Heart right ventricle (tissue), 16 donors: ENCODE measurements at regions of chr3 and their contacts with region 1.

Region 1: DNA sequence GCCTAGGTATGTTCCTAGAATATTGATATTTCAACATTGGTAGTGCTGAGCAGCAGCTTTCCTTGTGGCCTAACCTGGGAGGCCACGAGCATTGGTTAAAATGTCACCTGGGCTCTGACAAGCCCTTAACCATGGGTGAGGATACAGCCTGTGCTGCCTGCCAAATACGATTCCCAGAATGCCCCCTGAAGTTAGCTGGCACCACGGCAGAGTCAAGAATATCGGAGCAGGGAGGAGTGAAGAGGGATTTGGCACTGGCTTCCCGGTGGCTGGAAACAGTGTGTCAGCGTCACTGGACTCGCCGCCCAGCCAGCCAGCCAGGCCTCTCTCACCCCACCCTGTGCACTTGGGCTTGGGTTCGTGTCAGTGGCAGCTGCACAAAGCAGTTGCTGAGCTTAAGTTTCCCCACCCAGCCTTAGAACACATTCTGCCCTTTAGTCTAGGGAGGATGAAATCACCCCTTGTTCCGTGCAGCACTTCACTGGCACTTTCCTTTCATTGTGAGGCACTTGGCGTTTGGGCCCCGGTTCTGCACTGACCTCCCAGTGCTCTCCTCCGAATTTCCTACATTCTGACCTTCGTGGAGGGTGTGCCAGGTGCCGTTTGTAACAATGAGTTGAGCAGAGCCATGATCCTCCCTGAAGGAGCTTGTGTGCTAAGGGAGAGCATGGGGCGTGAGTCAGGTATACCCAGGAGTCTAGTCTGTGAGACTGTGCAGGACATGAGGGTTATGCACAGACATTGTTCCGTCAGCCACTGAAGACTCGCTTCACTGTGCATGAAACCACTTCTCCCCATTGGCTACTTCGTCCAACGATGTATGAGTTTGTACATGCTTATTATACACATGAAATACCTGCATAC is 152.8 kb upstream of the BHLHE40 start:
- DNase-seq: peak; percentile 85 to 87
- ATAC-seq: peak; percentile 85 to 96 (median 90)
- H3K4me3 ChIP-seq: peak overlapping the region in 4 of 10 donors; percentile 5 to 16 (median 10)
- H3K27ac ChIP-seq: peak overlapping the region; percentile 21 to 92 (median 85)
- H3K4me1 ChIP-seq: peaks cover 16 to 84% (median 44%) of the 10 kb centered on the region in 9 donors
- H3K27me3 ChIP-seq: no peaks in the 10 kb centered on the region
- CTCF ChIP-seq: no peak

Region 2: GRCh38 chr3:4741404-4742307 is 84.8 kb before region 1 on chr3:
- intact Hi-C with region 1: loop called in 1 of 10 experiments (anchors 5 kb)
- DNase-seq: peak; percentile 41 to 87
- ATAC-seq: peak; percentile 80 to 92 (median 86)
- H3K4me3 ChIP-seq: no peak overlapping the region
- H3K27ac ChIP-seq: peak overlapping the region; percentile 61 to 97 (median 87)
- H3K4me1 ChIP-seq: peaks cover 10 to 93% (median 47%) of the 10 kb centered on the region in 9 donors
- H3K27me3 ChIP-seq: no peaks in the 10 kb centered on the region
- CTCF ChIP-seq: no peak

Region 3: DNA sequence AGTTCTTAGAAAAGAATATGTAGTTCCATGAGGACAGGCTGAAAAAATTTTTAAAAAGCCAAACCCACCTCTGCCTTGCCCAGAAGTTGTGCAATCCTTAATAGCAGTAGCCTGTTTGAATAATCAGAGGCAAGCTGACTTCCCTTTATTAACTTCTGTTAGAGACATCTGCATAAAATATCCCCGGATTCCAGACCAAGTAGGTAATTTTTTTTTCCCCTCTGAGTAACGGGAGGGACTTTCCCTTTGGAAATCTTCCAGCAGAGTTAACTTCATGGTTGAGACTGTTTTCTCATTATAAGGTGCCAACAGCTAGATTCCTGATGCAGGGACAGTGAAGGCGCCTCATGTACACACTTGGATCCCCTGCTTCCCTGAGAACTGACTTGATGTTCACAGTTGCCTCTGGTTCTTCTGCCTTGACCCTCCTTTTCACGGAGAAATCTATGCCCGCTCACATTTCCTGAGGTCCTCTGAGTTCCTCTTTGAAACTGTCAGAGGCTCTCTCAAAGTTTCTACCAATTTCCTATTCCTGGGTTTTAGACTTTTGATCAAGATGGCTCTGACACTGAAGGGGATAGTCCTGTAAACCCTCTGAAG is 74.9 kb before region 1 on chr3:
- intact Hi-C with region 1: loop called in 1 of 10 experiments (anchors 5 kb)
- DNase-seq: peak in 1 of 2 donors; percentile 31
- ATAC-seq: peak; percentile 40 to 83 (median 74)
- H3K4me3 ChIP-seq: peak overlapping the region in 5 of 10 donors; percentile 10 to 28 (median 27)
- H3K27ac ChIP-seq: peak overlapping the region; percentile 7 to 94 (median 81)
- H3K4me1 ChIP-seq: peaks cover 8 to 74% (median 40%) of the 10 kb centered on the region in 9 donors
- H3K27me3 ChIP-seq: no peaks in the 10 kb centered on the region
- CTCF ChIP-seq: no peak

Region 4: GRCh38 chr3:4772171-4772804 is 54.2 kb before region 1 on chr3:
- intact Hi-C with region 1: loop called in 2 of 10 experiments (anchors 5 kb)
- DNase-seq: peak; percentile 84 to 86
- ATAC-seq: peak; percentile 85 to 92 (median 91)
- H3K4me3 ChIP-seq: peak overlapping the region in 1 of 10 donors; percentile 5
- H3K27ac ChIP-seq: peak overlapping the region; percentile 71 to 89 (median 84)
- H3K4me1 ChIP-seq: peaks cover 17 to 46% (median 31%) of the 10 kb centered on the region in 9 donors
- H3K27me3 ChIP-seq: no peaks in the 10 kb centered on the region
- CTCF ChIP-seq: no peak

Region 5: DNA sequence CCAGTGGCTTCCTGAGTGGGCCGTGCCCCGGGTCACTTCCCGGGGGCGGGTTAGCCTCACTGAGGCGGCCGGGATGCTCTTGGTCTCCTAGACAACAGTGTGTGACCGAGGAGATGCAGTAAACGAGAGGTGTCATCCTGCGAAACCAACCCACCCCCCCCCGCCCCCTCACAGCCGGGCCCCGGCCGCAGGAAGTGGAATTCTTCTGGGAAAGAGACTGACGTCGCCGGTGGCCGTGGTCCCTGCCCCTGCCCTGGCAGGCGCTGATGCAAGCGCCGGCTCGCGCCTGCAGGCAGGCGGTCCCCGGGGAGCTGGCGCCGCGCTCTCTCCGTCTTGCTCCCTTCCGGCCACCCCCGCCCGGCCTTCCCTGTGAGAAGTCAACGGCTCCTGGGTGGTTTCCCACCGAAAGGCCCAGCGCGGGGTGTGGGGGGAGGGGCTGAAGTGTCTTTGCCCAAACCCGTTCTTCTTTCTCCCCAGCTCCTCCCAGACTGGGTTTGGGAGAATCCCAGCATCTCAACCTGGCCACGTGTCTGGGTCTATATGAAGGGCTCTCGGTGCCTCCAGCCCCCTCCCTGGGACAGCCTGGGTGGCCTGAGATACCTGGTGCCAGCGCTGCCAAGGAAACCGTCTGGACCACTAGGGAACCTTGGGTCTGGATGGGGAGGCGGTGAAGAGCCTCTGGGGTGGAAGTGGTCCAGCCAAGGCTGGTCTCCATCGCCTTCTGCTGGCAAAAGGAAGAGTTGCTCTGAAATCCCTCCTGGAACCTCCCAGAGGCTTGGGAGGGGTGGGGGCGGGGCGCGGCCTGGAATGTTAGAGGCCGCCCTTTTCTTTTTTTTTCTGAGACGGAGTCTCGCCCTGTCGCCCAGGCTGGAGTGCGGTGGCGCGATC is 200.1 kb after region 1 on chr3:
- intact Hi-C with region 1: loop called in 1 of 10 experiments (anchors 2 kb)
- DNase-seq: peak; percentile 92 to 93
- ATAC-seq: peak; percentile 91 to 97 (median 95)
- H3K4me3 ChIP-seq: peak overlapping the region; percentile 8 to 63 (median 53)
- H3K27ac ChIP-seq: peak overlapping the region; percentile 75 to 94 (median 86)
- H3K4me1 ChIP-seq: peaks cover 0 to 23% (median 5%) of the 10 kb centered on the region in 9 donors
- H3K27me3 ChIP-seq: no peaks in the 10 kb centered on the region
- CTCF ChIP-seq: peak; percentile 51 to 76 (median 68)